ENCODE measurements at regions of chr9 and their contacts with region 1.

Region 1: DNA sequence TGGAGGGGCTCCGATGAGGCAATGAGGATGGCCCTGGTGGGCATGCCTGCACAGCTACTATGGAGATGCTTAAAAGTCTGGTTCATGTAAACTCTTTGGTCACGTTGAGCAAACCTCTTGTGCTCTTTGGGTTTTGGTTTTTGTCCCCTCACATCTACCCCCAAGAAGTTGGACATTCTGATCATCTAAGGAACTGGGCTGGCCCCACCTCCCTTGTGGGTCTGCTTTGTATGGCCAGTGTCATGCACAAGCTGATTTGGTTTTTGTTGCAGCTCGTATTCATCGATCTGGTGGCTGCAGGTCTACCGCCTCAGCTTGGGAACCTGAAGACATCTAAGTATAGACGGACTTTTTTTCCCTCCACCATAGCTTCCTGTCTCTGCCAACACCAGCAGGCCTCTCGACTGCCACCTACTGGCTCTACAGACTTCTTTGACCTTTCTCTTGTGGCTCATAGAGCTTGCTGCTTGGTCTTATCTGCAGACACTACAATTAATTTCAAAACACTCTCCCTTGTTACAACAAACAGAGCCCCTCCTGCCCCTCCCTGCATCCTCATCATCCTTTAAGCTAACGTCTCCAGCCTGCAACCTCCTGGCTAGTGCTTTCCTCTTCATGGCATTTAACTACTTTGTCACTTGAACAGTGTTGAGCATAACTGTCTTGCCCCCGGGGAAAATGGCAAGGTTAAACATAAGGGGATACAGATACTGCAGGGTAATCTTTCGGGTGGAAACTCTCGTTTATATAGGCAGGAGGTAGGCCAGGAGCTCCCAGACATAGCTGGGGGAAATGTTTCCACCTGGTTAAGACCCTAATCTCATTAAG is 34.5 kb downstream of the TSTD2 start:
- DNase-seq: peak in 1 of 2 donors; percentile 89
- H3K4me3 ChIP-seq: peak overlapping the region in 1 of 2 donors; percentile 4
- H3K27ac ChIP-seq: peak overlapping the region in 1 of 2 donors; percentile 29
- H3K4me1 ChIP-seq: peaks cover 6 to 19% of the 10 kb centered on the region in 2 donors
- H3K27me3 ChIP-seq: no peaks in the 10 kb centered on the region
- CTCF ChIP-seq: peak; percentile 66 to 78 (median 71)

Region 2: DNA sequence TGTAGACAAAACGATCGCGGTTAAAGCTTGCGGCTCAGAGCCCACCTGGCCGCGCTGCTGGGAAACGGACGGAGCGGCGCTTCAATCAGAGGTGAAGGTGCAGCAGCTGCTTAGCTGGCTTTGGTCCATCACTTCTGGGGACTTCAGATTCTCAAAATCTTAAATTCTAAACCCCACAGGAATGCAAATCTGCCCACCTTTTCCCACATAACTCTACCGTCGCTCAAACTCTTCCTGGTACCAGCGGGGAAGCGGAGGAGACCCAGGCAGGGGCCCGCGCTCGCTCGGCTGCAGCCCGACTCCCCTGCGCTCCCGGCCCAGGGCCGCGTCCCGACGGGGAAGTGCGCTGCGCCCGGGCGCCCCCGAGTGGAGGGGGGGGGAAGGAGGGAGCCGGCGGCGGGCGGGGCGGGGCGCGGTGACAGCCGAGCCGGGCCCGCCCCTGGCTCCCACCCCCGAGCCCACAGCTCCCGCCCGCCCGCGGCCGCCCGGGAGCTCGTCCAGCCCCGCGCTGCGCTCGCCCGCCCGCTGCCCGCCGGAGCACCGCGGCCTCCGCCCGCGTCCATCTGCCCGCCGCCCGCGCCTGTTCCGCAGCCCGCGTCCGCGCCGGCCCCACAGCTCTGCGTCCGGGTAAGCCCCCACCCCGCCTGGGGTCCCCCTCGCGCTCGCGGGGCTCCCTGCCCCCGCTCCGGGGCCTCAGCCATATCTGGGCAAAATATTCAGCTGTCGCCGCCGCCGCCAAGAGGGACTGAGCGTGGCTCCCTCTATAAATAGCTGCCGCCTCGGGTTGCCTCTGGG is 97.3 kb before region 1 on chr9 and contains the start of gene TMOD1:
- intact Hi-C with region 1: loop called (anchors 2 kb)
- DNase-seq: peak in 1 of 2 donors; percentile 86
- H3K4me3 ChIP-seq: peak within 1 kb of the TSS; percentile 84 to 99
- H3K27ac ChIP-seq: peak within 1 kb of the TSS; percentile 88 to 91
- H3K4me1 ChIP-seq: peaks cover 0 to 30% of the 10 kb centered on the region in 2 donors
- H3K27me3 ChIP-seq: no peaks in the 10 kb centered on the region
- CTCF ChIP-seq: peak in 2 of 3 experiments; percentile 28 to 35
- total RNA-seq, gene TMOD1: 17.1 TPM

Region 3: GRCh38 chr9:97615439-97616072 is 16.9 kb after region 1 on chr9:
- intact Hi-C with region 1: loop called (anchors 2 kb)
- DNase-seq: peak in 1 of 2 donors; percentile 76
- H3K4me3 ChIP-seq: no peak overlapping the region
- H3K27ac ChIP-seq: no peak overlapping the region
- H3K4me1 ChIP-seq: peaks cover 0 to 4% of the 10 kb centered on the region in 2 donors
- H3K27me3 ChIP-seq: no peaks in the 10 kb centered on the region
- CTCF ChIP-seq: peak; percentile 79 to 83 (median 79)